Natural killer cell (primary cell): ENCODE measurements at regions of chr3 and their contacts with region 1.

Region 1: GRCh38 chr3:12841149-12841970 is at the start of gene RPL32:
- DNase-seq: peak; percentile 80 to 97
- ATAC-seq: peak; percentile 93 to 96 (median 93)
- H3K4me3 ChIP-seq: peak within 1 kb of the TSS; percentile 89
- H3K4me3 Mint-ChIP-seq: peak within 1 kb of the TSS; percentile 94
- H3K27ac ChIP-seq: peak within 1 kb of the TSS; percentile 94
- H3K27ac Mint-ChIP-seq: peak within 1 kb of the TSS; percentile 97 to 99
- H3K4me1 ChIP-seq: peaks cover 27% of the 10 kb centered on the region
- H3K4me1 Mint-ChIP-seq: peaks cover 49 to 53% of the 10 kb centered on the region in 2 donors
- H3K27me3 ChIP-seq: no peaks in the 10 kb centered on the region
- H3K27me3 Mint-ChIP-seq: no peaks in the 10 kb centered on the region
- CTCF ChIP-seq: peak; percentile 79
- total RNA-seq, gene RPL32: 1,034 to 1,328 (median 1,277) TPM

Region 2: GRCh38 chr3:12810013-12810780 is 31.2 kb before region 1 on chr3:
- intact Hi-C with region 1: loop called (anchors 1 kb)
- DNase-seq: peak; percentile 95 to 96
- ATAC-seq: peak; percentile 99 to 100 (median 99)
- H3K4me3 ChIP-seq: peak overlapping the region; percentile 48
- H3K4me3 Mint-ChIP-seq: peak overlapping the region; percentile 73
- H3K27ac ChIP-seq: no peak overlapping the region
- H3K27ac Mint-ChIP-seq: peak overlapping the region in 1 of 2 donors; percentile 68
- H3K4me1 ChIP-seq: peaks cover 10% of the 10 kb centered on the region
- H3K4me1 Mint-ChIP-seq: peaks cover 0 to 13% of the 10 kb centered on the region in 2 donors
- H3K27me3 ChIP-seq: no peaks in the 10 kb centered on the region
- H3K27me3 Mint-ChIP-seq: no peaks in the 10 kb centered on the region
- CTCF ChIP-seq: peak; percentile 94